Activated naive CD4-positive, alpha-beta T cell treated with anti-CD3 and anti-CD28 coated beads for 36 hours (primary cell): ENCODE measurements at regions of chr13 and their contacts with region 1.

Region 1: GRCh38 chr13:31909864-31910551 is 121.6 kb upstream of the FRY start:
- DNase-seq: peak; percentile 63
- H3K4me3 Mint-ChIP-seq: no peak overlapping the region
- H3K27ac Mint-ChIP-seq: no peak overlapping the region
- H3K4me1 Mint-ChIP-seq: no peaks in the 10 kb centered on the region
- H3K27me3 Mint-ChIP-seq: peaks cover 3% of the 10 kb centered on the region

Region 2: DNA sequence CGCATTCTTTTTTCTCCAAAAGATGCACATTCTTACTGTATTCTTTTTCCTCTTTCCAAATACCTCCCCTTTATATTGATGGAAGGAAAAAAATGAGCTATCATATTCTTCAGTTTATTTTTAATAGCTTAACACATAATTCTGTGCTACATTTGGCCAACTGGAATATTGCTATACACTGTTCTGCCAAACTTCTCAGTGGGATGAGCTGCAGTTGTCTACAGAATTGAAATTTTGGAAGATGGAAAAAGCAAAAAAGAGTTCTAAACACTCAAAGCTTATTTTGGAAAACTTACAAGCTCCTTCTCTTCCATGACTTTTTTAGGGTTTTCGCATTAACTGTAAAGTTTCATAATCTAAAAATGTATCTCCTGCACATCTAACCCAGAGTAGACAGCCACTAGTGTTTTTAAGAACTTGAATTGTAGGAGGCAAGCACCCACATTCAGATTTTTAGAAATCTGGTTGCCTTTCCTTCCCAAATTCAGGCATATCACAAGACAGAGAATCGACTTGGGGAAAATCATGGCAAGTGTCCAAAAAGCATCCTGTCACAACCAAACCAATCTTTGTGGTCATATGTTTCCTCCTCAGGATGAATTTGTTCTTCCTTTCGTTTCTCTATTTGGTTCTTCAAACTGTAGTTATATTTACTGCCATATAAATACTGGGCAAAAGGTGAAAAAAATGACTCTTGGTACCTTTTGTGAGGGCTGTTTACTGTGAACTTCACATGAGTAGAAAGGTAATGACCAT is 10.1 kb after region 1 on chr13:
- CTCF ChIA-PET with region 1: interaction called, 18 read pairs
- intact Hi-C with region 1: no loop called
- DNase-seq: no peak
- H3K4me3 Mint-ChIP-seq: no peak overlapping the region
- H3K27ac Mint-ChIP-seq: no peak overlapping the region
- H3K4me1 Mint-ChIP-seq: peaks cover 4% of the 10 kb centered on the region
- H3K27me3 Mint-ChIP-seq: no peaks in the 10 kb centered on the region

Region 3: DNA sequence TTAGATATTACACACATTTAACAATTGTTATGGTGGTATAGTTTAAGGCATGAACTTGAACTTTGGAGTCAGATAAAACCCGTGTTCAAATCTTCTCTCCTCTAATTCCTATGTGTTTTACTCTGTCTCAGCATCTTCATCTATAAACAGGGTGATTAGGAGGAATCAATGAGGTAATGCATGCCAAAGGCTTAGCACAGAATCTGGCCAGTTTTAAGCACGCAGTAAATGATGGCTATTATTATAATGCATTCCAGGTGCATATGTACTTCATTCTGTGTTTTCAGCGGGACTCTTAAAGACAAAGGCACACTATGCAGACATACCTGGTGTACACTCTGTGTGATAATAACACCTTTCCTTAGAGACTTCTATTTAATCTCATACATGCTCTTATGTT is 33.6 kb after region 1 on chr13:
- CTCF ChIA-PET with region 1: no interaction called
- intact Hi-C with region 1: no loop called
- DNase-seq: no peak
- H3K4me3 Mint-ChIP-seq: no peak overlapping the region
- H3K27ac Mint-ChIP-seq: no peak overlapping the region
- H3K4me1 Mint-ChIP-seq: no peaks in the 10 kb centered on the region
- H3K27me3 Mint-ChIP-seq: peaks cover 3% of the 10 kb centered on the region

Region 4: GRCh38 chr13:32001185-32001768 is 91.3 kb after region 1 on chr13:
- CTCF ChIA-PET with region 1: interaction called, 13 read pairs
- intact Hi-C with region 1: no loop called
- DNase-seq: peak; percentile 14
- H3K4me3 Mint-ChIP-seq: no peak overlapping the region
- H3K27ac Mint-ChIP-seq: no peak overlapping the region
- H3K4me1 Mint-ChIP-seq: no peaks in the 10 kb centered on the region
- H3K27me3 Mint-ChIP-seq: no peaks in the 10 kb centered on the region

Region 5: GRCh38 chr13:32019612-32020233 is 109.7 kb after region 1 on chr13:
- CTCF ChIA-PET with region 1: interaction called, 3 read pairs
- intact Hi-C with region 1: loop called (anchors 5 kb)
- DNase-seq: peak; percentile 62
- H3K4me3 Mint-ChIP-seq: no peak overlapping the region
- H3K27ac Mint-ChIP-seq: no peak overlapping the region
- H3K4me1 Mint-ChIP-seq: no peaks in the 10 kb centered on the region
- H3K27me3 Mint-ChIP-seq: no peaks in the 10 kb centered on the region

Region 6: DNA sequence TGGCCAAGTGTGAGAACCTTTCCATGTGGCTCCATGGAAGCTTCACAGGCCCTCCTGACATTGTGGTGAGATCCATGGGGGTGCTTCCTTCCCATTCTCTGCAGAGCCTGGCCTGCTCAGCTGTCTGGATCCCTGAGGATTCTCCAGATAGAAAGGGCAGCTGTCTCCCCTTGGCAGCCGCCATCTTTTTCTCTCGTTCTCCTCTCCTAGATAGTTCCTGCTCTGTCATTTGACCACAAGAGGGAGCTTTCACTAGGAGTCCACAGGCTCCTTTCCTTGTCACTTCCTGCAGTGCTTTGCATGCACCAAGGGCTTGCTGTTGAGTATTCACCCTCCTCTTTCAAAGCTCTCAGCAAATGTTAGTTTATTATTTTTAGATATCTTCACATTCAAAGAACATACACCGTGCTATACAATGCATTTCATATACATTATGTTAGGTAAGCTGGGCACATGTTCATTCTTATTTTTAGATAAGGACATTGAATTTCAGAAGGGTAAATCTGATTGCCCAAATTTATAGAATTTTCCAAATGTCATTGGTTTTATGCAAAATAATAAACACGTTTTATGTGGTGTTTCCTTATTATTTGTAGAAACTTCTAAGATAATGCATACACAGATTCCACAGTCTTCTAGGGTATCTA is 254.7 kb after region 1 on chr13:
- CTCF ChIA-PET with region 1: interaction called, 12 read pairs
- intact Hi-C with region 1: no loop called
- DNase-seq: peak; percentile 32
- H3K4me3 Mint-ChIP-seq: no peak overlapping the region
- H3K27ac Mint-ChIP-seq: no peak overlapping the region
- H3K4me1 Mint-ChIP-seq: no peaks in the 10 kb centered on the region
- H3K27me3 Mint-ChIP-seq: no peaks in the 10 kb centered on the region